ENCODE measurements at regions of chr6 and their contacts with region 1.

Region 1: GRCh38 chr6:159062564-159062945 is 17.8 kb upstream of the TAGAP start:
- DNase-seq: peak; percentile 25 to 83 (median 80)
- H3K4me3 ChIP-seq: peak overlapping the region; percentile 3
- H3K4me3 Mint-ChIP-seq: peak overlapping the region; percentile 43 to 89 (median 75)
- H3K27ac ChIP-seq: peak overlapping the region; percentile 70
- H3K27ac Mint-ChIP-seq: peak overlapping the region; percentile 94 to 99 (median 98)
- H3K4me1 ChIP-seq: peaks cover 69% of the 10 kb centered on the region
- H3K4me1 Mint-ChIP-seq: peaks cover 85 to 98% (median 97%) of the 10 kb centered on the region in 3 donors
- H3K27me3 ChIP-seq: no peaks in the 10 kb centered on the region
- H3K27me3 Mint-ChIP-seq: no peaks in the 10 kb centered on the region

Region 2: GRCh38 chr6:159080217-159080976 is 17.8 kb after region 1 on chr6:
- CTCF ChIA-PET with region 1: interaction called, 17 read pairs
- POLR2A ChIA-PET with region 1: interaction called, 4 read pairs
- DNase-seq: no peak
- H3K4me3 ChIP-seq: peak overlapping the region; percentile 2
- H3K4me3 Mint-ChIP-seq: peak overlapping the region in 4 of 7 donors; percentile 4 to 41 (median 26)
- H3K27ac ChIP-seq: no peak overlapping the region
- H3K27ac Mint-ChIP-seq: peak overlapping the region in 4 of 8 donors; percentile 51 to 82 (median 60)
- H3K4me1 ChIP-seq: peaks cover 20% of the 10 kb centered on the region
- H3K4me1 Mint-ChIP-seq: peaks cover 44 to 51% (median 49%) of the 10 kb centered on the region in 3 donors
- H3K27me3 ChIP-seq: no peaks in the 10 kb centered on the region
- H3K27me3 Mint-ChIP-seq: peaks cover 0 to 1% of the 10 kb centered on the region in 2 donors